Activated CD4-positive, alpha-beta T cell treated with anti-CD3 and anti-CD28 coated beads for 36 hours (primary cell): ENCODE measurements at regions of chr11 and their contacts with region 1.

Region 1: DNA sequence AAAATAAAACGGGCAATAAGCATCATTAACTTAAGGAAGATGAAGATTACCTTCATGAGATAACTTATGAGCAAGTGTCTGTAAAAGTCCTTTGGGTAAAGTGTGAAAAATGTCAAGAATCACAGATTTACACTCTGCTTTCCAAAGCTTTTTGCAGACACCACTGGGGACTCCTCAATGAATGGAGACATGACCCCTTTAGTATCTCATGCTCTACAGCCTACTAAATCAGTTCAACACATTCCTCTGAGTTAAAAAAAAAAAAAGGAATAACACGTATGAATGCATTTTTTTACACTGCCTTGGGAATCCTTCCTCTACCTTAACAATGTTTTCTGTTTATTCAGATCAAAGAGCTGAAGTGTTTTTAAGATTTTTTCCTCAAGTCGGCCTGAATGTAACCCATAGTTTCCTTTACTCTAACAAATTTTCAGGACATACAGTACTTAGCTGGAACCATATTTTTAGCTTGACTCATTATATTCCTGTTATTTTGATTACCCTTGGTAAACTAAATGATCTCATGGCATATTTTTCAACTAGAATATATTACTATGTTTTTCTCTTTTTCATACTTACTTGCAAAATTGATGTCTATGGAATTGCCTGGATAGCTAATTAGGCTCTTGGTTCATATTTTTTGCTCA is 25.9 kb upstream of the RAB30 start:
- DNase-seq: no peak
- ATAC-seq: no peak
- H3K4me3 Mint-ChIP-seq: no peak overlapping the region
- H3K27ac Mint-ChIP-seq: no peak overlapping the region
- H3K4me1 Mint-ChIP-seq: no peaks in the 10 kb centered on the region
- H3K27me3 Mint-ChIP-seq: no peaks in the 10 kb centered on the region

Region 2: DNA sequence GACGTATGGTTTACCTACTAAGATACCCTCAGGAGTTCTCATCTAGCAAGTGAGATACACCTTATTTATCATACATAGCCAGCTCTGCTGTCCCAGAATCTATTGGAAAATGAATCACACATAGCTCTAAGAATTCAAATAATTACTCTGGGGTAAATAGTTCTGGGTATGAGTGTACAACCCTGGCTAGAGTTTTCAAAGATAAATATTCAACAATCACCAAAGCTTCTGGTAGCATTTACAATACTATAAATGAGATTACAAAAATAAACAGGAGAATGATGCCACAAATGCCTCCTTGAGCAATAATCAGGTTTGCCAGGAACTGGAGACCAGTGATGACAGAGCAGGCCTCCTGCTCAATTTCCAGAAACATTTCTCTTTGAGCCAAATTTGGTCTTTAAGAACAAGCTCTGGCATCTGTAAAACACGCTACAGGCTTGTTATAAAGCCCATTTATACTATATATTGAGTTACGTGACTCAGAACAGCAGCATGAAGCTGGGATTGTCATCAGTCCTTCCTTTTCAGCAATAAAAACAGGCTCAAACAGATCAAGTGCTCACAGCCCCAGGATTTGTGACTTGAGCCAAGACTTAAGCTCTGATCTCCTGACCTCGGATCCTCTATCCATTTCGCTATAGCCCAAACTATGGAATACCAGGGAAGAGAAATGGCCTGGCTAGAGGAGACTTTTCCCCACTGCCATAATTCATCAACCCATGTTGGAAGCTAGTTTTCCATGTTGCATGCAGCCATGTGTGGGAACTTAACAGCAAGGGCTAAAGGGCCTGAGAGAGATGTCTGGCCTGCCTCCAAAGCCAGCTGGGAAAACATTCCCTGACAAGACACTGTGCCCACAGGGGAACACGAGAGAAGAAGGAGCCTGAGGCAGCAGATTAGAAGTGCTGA is 45.5 kb before region 1 on chr11:
- CTCF ChIA-PET with region 1: no interaction called
- POLR2A ChIA-PET with region 1: no interaction called
- intact Hi-C with region 1: no loop called
- DNase-seq: no peak
- ATAC-seq: peak; percentile 63
- H3K4me3 Mint-ChIP-seq: no peak overlapping the region
- H3K27ac Mint-ChIP-seq: no peak overlapping the region
- H3K4me1 Mint-ChIP-seq: peaks cover 51% of the 10 kb centered on the region
- H3K27me3 Mint-ChIP-seq: no peaks in the 10 kb centered on the region

Region 3: DNA sequence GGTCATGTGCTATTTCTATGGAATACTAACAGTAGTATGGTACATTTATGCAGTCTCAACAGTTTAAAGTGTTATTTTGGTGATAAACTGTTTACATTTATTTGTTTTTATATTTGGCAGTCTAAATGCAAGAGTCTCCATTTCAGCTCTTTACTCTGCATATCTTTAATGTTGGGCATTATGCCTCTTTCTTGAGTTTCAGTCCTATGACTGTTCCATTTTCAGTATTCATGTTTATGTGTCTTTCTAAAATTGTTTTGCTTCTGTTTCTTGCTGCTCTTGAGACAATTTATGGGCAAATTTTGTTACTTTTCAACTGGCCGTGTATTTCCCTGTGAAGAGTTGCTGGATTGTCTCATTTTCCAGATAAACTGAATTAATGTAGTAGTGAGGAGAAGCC is 19.3 kb before region 1 on chr11:
- CTCF ChIA-PET with region 1: no interaction called
- POLR2A ChIA-PET with region 1: no interaction called
- intact Hi-C with region 1: loop called in 1 of 2 experiments (anchors 2 kb)
- DNase-seq: no peak
- ATAC-seq: no peak
- H3K4me3 Mint-ChIP-seq: no peak overlapping the region
- H3K27ac Mint-ChIP-seq: no peak overlapping the region
- H3K4me1 Mint-ChIP-seq: peaks cover 39% of the 10 kb centered on the region
- H3K27me3 Mint-ChIP-seq: no peaks in the 10 kb centered on the region